ENCODE measurements at regions of chr19 and their contacts with region 1.

Region 1: GRCh38 chr19:45770192-45771101 is 1.4 kb upstream of the SIX5 start:
- DNase-seq: peak; percentile 99 to 100
- ATAC-seq: peak; percentile 49 to 83
- H3K4me3 ChIP-seq: peak overlapping the region; percentile 45
- H3K27ac ChIP-seq: peak overlapping the region; percentile 71 to 87
- H3K4me1 ChIP-seq: peaks cover 18% of the 10 kb centered on the region
- CTCF ChIP-seq: peak; percentile 96
- EP300 ChIP-seq: no peak
- POLR2A ChIP-seq: peak; percentile 32
- RAD21 ChIP-seq: peak; percentile 78 to 92

Region 2: GRCh38 chr19:45730389-45731288 is 39.8 kb before region 1 on chr19 and contains the start of gene FBXO46:
- CTCF ChIA-PET with region 1: interaction called, 43 read pairs
- POLR2A ChIA-PET with region 1: interaction called, 32 read pairs
- DNase-seq: peak; percentile 98 to 99
- ATAC-seq: peak; percentile 98 to 99
- H3K4me3 ChIP-seq: peak within 1 kb of the TSS; percentile 89
- H3K27ac ChIP-seq: peak within 1 kb of the TSS; percentile 92 to 95
- H3K4me1 ChIP-seq: peaks cover 24% of the 10 kb centered on the region
- CTCF ChIP-seq: no peak
- EP300 ChIP-seq: no peak
- POLR2A ChIP-seq: peak; percentile 75
- RAD21 ChIP-seq: peak; percentile 14 to 23; a peak in 2 of 5 replicates
- polyA plus RNA-seq, gene FBXO46: 4.9 and 6.9 TPM in 2 replicates

Region 3: GRCh38 chr19:45753546-45753945 is 16.9 kb before region 1 on chr19:
- CTCF ChIA-PET with region 1: interaction called, 96 read pairs
- POLR2A ChIA-PET with region 1: interaction called, 10 read pairs
- DNase-seq: no peak
- ATAC-seq: peak; percentile 23 to 56; a peak in 3 of 6 replicates
- H3K4me3 ChIP-seq: no peak overlapping the region
- H3K27ac ChIP-seq: no peak overlapping the region
- H3K4me1 ChIP-seq: 0 out of 3 replicates have a peak, but pooled peaks cover 6% of the 10 kb centered on the region
- CTCF ChIP-seq: no peak
- EP300 ChIP-seq: no peak
- POLR2A ChIP-seq: no peak
- RAD21 ChIP-seq: no peak

Region 4: DNA sequence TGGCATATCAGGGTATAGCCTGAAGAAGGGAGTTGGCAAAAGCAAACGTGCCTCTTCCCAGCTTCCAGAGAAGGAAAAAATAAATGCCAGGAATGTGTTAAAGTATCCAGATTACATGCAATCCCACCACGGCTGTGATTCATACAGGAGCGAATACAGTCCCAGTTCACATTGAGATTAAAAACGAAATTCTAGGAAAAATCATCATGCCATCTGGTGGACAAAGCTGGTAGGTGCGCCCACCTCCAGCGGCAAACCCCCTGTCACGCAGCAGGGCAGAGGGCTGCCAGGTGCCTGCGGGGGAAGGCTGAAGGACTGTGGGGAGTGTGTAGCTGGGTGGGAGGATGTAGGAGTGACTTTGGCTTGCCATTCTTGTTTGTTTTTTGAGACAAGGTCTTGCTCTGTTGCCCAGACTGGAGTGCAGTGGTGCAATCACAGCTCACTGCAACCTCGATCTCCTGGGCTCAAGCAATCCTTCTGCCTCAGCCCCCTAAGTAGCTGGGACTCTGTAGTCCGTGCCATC is 28.6 kb after region 1 on chr19:
- CTCF ChIA-PET with region 1: interaction called, 2,204 read pairs
- POLR2A ChIA-PET with region 1: interaction called, 23 read pairs
- DNase-seq: peak; percentile 68 to 94
- ATAC-seq: peak; percentile 85 to 94
- H3K4me3 ChIP-seq: no peak overlapping the region
- H3K27ac ChIP-seq: peak overlapping the region in 1 of 2 experiments; percentile 66; a peak in 2 of 6 replicates
- H3K4me1 ChIP-seq: peaks cover 18% of the 10 kb centered on the region
- CTCF ChIP-seq: peak; percentile 92
- EP300 ChIP-seq: no peak
- POLR2A ChIP-seq: no peak
- RAD21 ChIP-seq: peak; percentile 79

Region 5: DNA sequence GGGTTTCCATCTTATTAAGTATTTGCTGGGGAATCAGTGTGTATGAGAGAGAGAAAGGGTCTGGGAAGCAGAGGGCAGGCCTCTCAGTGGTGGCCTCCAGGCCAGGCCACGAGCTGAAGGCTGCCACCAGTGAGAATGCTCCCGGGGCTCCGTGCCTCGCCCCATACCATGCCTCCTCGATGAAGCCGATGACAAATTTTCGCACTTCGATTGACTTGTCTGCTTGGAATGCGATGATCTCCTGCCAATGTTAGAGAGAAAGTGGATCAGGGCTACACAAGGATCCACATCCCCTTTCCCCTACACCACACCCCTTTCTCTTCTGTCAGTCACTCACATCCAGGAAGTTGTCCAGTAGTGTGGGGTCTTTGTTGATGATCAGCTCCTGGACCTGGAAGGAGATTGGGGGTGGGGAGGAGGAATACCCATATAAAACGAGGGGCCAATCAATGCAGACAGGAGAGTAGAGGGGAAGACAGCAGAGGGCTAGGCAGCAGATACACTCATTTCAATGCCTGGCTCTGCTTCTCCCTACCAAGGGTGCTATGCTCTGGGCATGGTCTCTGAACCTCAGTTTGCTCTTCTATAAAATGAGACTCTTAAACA is 81.8 kb after region 1 on chr19:
- CTCF ChIA-PET with region 1: no interaction called
- POLR2A ChIA-PET with region 1: no interaction called
- DNase-seq: no peak
- ATAC-seq: no peak
- H3K4me3 ChIP-seq: no peak overlapping the region
- H3K27ac ChIP-seq: no peak overlapping the region
- H3K4me1 ChIP-seq: no peaks in the 10 kb centered on the region
- CTCF ChIP-seq: no peak
- EP300 ChIP-seq: no peak
- POLR2A ChIP-seq: no peak
- RAD21 ChIP-seq: no peak

Region 6: DNA sequence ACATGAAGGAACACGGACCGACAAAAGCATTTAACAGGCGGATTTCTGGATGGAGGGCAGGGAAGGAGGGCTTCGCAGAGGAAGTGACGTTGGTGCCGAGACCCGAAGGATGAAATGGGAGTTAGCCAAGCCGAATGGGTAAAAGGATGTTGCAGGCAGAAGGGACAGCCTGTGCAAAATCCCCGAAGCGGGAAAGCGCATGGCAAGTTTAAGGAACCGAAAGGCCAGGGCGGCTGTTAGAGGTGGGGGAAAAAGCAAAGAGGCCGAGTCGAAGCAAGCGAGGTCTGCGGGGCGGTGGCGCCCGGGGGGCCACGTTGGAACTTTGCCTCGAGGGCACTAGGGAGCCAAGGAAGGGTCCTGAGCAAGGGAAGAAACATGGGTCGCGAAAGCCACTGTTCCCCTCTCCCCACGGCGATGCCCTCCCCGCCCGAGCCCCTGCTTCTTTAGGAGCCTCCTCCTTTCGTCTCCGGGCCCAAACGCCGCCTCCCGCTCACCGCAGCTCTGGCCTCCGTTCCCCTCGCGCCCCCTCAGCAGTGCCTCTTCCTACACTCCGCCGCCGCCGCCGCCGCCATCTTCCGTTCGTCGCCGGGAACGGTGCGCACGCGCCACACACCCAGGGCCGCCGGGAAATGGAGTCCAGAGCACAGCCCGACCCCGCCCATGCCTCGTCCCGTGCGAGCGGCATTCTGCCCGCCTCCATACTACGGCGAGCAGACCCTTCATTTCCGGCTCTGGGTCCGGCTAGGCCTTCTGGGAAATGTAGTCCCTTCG is 92.3 kb after region 1 on chr19 and contains the start of gene SYMPK:
- CTCF ChIA-PET with region 1: interaction called, 14 read pairs
- POLR2A ChIA-PET with region 1: interaction called, 6 read pairs
- DNase-seq: peak; percentile 99 to 100
- ATAC-seq: peak; percentile 92 to 96
- H3K4me3 ChIP-seq: peak within 1 kb of the TSS; percentile 71
- H3K27ac ChIP-seq: peak within 1 kb of the TSS; percentile 88
- H3K4me1 ChIP-seq: peaks cover 25% of the 10 kb centered on the region
- CTCF ChIP-seq: no peak
- EP300 ChIP-seq: no peak; a peak in 1 of 5 replicates
- POLR2A ChIP-seq: peak; percentile 59
- RAD21 ChIP-seq: no peak
- polyA plus RNA-seq, gene SYMPK: 92.6 and 105 TPM in 2 replicates